AG04450 (cell line): ENCODE measurements at regions of chr1 and their contacts with region 1.

Region 1: DNA sequence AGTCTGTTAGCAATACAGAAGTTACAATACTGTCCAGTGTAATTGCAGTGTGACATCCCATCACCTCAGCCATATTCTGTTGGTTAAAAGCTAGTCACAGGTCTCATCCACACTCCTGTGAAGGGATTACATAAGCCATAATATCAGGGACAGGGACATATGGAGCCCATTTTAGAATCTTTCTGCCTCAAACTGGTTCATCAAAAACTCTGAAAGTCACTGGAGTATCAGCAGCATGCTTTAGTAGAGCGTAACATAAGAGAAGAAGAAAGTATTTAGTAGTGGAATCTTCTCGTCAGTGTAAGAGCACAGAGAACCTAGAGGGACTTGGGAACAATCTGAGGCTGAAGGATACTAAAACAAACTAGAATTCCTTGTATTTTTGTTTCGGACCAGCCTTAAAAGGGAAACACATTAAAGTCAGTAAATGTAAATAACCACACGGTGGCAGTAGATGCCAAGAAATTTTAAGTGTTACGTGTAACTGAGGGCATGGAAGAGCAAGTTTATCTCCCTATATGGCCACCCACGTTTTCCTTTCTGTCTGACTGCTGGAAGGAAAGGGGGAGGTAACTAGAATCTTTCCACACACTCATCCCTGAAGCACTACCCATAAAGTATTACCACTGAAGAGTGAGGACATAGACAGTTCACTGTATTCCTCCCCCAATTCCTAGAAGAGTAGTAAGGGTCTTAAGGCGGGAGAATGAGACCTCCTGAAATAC is 41.6 kb upstream of the AGL start:
- DNase-seq: peak; percentile 91
- H3K4me3 ChIP-seq: peak overlapping the region; percentile 33; the same call in 1 of the 2 replicates
- H3K27ac ChIP-seq: no peak overlapping the region
- H3K27me3 ChIP-seq: no peaks in the 10 kb centered on the region
- CTCF ChIP-seq: peak; percentile 62

Region 2: DNA sequence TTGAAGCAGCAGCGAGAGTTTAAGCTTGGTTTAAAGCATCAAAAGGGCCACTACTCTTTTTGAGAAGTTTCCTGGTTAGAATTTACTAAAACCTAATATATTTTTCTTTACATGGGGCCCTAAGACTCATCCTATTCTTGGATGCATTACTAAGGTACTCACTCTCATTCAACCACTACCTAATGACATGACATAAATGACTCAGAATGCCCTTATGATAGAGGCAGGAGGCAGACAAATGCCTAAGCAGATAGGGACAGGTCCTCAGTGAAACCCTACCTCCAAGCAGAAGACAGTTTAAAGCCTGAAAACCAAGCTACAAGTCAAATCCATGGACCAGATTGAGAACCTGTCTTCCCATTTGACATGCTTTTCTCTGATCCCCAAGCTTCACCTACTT is 127.0 kb after region 1 on chr1:
- CTCF ChIA-PET with region 1: interaction called, 10 read pairs
- POLR2A ChIA-PET with region 1: no interaction called
- DNase-seq: no peak
- H3K4me3 ChIP-seq: no peak overlapping the region
- H3K27ac ChIP-seq: no peak overlapping the region
- H3K27me3 ChIP-seq: peaks cover 2% of the 10 kb centered on the region
- CTCF ChIP-seq: no peak

Region 3: GRCh38 chr1:100134872-100135271 is 326.3 kb after region 1 on chr1:
- CTCF ChIA-PET with region 1: interaction called, 12 read pairs
- POLR2A ChIA-PET with region 1: no interaction called
- DNase-seq: no peak
- H3K4me3 ChIP-seq: no peak overlapping the region
- H3K27ac ChIP-seq: no peak overlapping the region
- H3K27me3 ChIP-seq: no peaks in the 10 kb centered on the region
- CTCF ChIP-seq: no peak

Region 4: DNA sequence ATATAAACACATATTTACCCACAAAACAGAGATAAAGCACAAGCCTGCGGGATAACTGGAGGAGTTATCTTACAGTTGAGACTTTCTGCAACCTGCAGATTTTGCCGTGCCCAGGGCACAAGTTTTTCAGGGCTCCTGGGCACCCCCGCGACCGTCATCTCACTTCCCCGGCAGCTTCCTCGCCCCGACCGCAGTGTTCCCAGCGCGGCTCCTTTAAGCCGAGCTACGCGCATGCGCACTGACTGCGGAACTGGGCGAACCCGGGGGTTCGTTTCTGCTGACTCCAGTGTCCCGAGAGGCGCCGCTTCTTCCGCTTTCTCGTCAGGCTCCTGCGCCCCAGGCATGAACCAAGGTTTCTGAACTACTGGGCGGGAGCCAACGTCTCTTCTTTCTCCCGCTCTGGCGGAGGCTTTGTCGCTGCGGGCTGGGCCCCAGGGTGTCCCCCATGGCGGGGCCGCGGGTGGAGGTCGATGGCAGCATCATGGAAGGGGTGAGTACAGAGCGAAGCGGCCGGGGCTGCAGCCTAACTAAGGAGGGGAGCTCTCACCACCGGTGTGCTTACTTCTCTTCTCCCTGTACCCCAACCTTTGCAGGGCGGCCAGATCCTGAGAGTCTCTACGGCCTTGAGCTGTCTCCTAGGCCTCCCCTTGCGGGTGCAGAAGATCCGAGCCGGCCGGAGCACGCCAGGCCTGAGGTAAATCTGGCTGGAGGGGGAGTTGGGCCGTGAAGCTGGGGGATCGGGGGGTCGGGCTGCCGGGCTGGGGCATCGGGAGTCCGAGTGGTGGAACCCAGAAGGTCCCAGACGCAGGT is 457.6 kb after region 1 on chr1 and contains the start of gene RTCA:
- CTCF ChIA-PET with region 1: interaction called, 4 read pairs
- POLR2A ChIA-PET with region 1: interaction called, 11 read pairs
- DNase-seq: peak; percentile 88
- H3K4me3 ChIP-seq: peak within 1 kb of the TSS; percentile 89
- H3K27ac ChIP-seq: peak within 1 kb of the TSS; percentile 68
- H3K27me3 ChIP-seq: no peaks in the 10 kb centered on the region
- CTCF ChIP-seq: no peak
- polyA plus RNA-seq, gene RTCA: 35.2 and 48.8 TPM in 2 replicates